ENCODE measurements at regions of chr4 and their contacts with region 1.

Region 1: DNA sequence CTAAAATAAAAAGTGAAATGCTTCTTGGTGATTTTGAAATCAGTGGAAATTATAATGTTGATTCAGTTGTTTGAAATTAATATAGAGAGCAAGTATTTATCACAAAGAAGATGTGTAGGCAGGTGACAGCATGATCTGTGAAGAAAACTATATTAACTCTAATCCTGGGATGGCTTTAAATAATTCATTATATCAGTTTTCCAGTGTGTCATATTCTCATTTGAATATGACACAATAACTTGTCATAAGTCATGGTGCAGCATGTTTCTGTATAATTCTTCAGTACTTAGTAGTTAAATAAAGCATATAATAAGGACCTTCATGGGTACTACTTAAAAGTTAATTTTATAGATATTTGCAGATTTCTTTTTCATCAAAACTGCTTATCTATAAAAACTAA is 573.6 kb downstream of the INPP4B start:
- DNase-seq: no peak
- CTCF ChIP-seq: no peak

Region 2: DNA sequence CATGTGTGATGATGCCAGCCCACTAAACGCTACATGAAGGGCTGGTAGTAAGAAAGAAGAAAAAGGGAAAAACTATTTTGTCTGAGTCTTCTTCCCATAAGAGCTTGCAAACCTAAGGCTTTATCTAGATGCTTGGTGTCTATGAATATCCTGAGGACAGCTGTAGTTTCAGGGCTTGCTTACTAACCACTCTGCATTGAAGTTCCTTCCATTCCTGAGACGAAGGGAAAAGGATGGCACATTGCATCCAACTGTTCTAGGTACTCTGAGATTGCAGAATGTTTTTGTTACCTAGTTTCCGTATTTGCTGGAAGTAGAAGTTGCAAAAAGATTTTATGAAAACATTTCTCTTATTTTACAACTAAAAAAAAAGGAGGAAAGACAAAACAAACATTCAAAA is 91.4 kb before region 1 on chr4:
- CTCF ChIA-PET with region 1: no interaction called
- POLR2A ChIA-PET with region 1: no interaction called
- DNase-seq: no peak
- CTCF ChIP-seq: no peak

Region 3: GRCh38 chr4:142218726-142219125 is 53.7 kb before region 1 on chr4:
- CTCF ChIA-PET with region 1: no interaction called
- POLR2A ChIA-PET with region 1: no interaction called
- DNase-seq: no peak
- CTCF ChIP-seq: no peak

Region 4: DNA sequence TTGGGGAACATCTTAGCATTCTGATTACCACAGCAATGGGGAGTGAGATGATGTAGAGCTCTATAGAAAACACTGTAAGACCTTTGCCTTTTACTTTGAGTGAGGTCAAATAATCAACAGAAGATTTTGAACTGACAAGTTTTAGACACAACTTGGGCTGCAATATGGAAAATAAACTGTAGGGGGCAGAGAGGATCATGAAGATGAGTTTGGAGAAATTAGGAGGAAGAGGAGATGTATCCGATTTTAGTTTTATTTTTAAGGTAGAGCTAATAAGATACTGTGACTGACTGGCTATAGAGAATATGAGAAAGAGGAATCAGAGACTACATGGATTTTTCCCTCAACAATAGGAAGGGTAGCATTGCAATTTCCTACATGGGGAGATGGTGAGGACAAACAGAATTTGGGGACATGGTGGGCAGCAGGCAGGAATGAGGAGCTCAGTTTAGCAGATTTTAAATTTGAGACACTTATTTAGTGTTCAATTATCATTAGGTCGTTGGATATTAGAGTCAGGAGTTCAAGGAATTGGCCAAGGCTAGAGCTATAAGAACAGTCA is 10.5 kb after region 1 on chr4:
- CTCF ChIA-PET with region 1: interaction called, 10 read pairs
- POLR2A ChIA-PET with region 1: no interaction called
- DNase-seq: no peak
- CTCF ChIP-seq: no peak

Measured in GM10248 (cell line).